Activated CD4-positive, alpha-beta T cell treated with anti-CD3 and anti-CD28 coated beads for 36 hours (primary cell): ENCODE measurements at regions of chr9 and their contacts with region 1.

Region 1: DNA sequence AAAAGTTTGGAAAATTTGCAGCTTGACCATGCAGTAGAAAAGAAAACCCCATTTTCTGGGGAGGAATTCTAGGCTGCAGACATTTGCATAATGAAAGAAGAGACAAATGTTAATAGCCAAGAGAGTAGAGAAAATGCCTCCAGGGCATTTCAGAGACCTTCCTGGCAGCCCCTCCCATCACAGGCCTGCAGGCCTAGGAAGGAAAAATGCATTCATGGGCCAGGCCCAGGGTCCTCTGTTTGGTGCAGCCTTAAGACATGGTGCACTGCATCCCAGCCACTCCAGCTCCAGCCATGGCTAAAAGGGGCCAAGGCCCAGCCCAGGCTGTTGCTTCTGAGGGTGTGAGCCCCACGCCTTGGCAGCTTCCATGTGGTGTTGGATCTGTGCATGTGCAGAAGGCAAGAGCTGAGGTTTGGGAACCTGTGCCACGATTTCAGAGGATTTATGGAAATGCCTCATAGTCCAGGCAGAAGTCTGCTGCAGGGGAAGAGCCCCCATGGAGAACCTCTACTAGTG is 75.0 kb upstream of the OR13F1 start:
- DNase-seq: no peak
- ATAC-seq: no peak
- H3K4me3 Mint-ChIP-seq: no peak overlapping the region
- H3K27ac Mint-ChIP-seq: no peak overlapping the region
- H3K4me1 Mint-ChIP-seq: no peaks in the 10 kb centered on the region
- H3K27me3 Mint-ChIP-seq: no peaks in the 10 kb centered on the region

Region 2: DNA sequence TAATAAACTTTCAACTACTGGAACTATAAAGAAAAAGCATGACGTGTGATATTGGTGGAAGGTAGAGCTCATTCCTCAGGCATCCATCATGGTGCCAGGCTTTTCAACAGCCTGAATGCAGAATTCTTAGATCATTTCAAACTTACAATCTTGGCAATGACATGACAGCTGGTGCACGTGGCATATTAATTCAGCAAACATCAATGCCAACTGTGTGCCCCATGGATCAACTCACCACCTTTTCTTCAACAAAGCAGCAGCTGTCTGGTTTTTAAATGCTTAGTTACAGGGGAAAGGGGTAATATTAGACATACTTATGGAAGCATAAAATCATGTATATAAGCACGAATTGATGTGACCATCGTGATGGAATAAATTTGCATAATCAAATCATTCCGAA is 18.9 kb after region 1 on chr9:
- CTCF ChIA-PET with region 1: no interaction called
- POLR2A ChIA-PET with region 1: no interaction called
- intact Hi-C with region 1: loop called in 1 of 2 experiments (anchors 1 kb)
- DNase-seq: no peak
- ATAC-seq: no peak
- H3K4me3 Mint-ChIP-seq: no peak overlapping the region
- H3K27ac Mint-ChIP-seq: no peak overlapping the region
- H3K4me1 Mint-ChIP-seq: no peaks in the 10 kb centered on the region
- H3K27me3 Mint-ChIP-seq: no peaks in the 10 kb centered on the region

Region 3: DNA sequence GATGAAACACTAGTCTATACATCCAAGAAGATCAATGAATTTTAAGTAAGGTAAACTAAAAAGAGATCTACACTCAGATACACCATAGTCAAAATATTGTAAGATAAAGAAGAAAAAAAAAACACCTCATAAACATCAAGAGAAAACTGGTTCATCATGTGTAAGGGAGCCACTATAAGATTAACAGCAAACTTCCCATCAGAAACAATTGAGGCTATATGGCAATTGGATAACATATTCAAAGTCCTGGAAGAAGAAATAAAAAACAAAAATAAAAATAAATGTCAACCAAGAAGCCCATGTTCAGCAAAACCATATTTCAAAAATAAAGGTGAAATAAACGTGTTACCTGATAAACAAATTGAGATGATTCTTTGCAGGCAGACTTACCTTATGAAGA is 143.5 kb after region 1 on chr9:
- CTCF ChIA-PET with region 1: no interaction called
- POLR2A ChIA-PET with region 1: no interaction called
- intact Hi-C with region 1: loop called in 1 of 2 experiments (anchors 5 kb)
- DNase-seq: no peak
- ATAC-seq: no peak
- H3K4me3 Mint-ChIP-seq: no peak overlapping the region
- H3K27ac Mint-ChIP-seq: no peak overlapping the region
- H3K4me1 Mint-ChIP-seq: no peaks in the 10 kb centered on the region
- H3K27me3 Mint-ChIP-seq: no peaks in the 10 kb centered on the region